H1 (cell line): ENCODE measurements at regions of chr4 and their contacts with region 1.

Region 1: GRCh38 chr4:123767806-123768205 is 371.2 kb downstream of the SPRY1 start:
- DNase-seq: no peak
- H3K4me3 ChIP-seq: no peak overlapping the region
- H3K27ac ChIP-seq: no peak overlapping the region
- H3K4me1 ChIP-seq: no peaks in the 10 kb centered on the region
- H3K27me3 ChIP-seq: no peaks in the 10 kb centered on the region
- CTCF ChIP-seq: no peak
- EP300 ChIP-seq: no peak
- POLR2A ChIP-seq: no peak
- RAD21 ChIP-seq: no peak

Region 2: GRCh38 chr4:123750044-123750443 is 17.8 kb before region 1 on chr4:
- CTCF ChIA-PET with region 1: interaction called, 23 read pairs
- POLR2A ChIA-PET with region 1: no interaction called
- DNase-seq: peak in 1 of 2 experiments; percentile 23
- H3K4me3 ChIP-seq: no peak overlapping the region
- H3K27ac ChIP-seq: no peak overlapping the region
- H3K4me1 ChIP-seq: no peaks in the 10 kb centered on the region; a peak in 1 of 7 replicates
- H3K27me3 ChIP-seq: no peaks in the 10 kb centered on the region
- CTCF ChIP-seq: no peak
- EP300 ChIP-seq: no peak
- POLR2A ChIP-seq: no peak
- RAD21 ChIP-seq: 0 out of 4 replicates have a peak, but pooled peaks of 1 of the 2 experiments have one; percentile 1

Region 3: DNA sequence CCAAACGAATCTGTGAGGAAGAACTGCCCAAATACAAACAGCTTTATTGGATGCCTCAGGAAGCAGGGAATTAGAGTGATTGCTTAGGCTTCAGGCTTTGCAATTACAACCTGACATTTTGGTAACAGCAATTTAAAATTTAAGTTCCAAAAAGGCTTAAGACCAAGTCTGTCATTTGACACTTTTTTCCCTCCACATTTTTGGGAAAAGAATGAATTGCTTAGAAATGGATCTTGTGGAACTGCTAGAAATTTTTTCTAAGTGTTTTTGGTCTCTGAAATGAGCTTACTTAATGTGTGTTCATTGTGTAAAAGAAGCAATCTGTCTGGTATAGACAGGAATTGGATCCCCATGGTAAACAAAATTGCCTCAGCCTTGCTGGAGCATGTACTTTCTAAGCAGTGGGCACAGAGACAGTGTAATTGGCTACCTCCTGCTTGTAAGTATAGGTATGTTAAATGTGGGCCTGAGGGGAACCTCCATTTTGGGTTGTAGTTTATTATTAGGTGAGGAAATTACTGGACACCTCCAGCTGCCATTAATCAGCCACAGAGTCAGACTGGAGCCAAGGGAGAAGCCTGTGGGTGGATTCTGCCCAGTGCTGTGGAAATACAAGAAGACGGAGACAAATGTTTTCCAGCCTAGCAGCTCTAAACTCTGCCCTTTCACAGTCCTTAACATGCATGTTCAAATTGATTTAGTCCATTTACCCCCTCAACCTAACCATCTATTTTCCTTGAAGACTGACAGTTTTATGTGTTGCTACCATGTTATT is 101.7 kb after region 1 on chr4:
- CTCF ChIA-PET with region 1: no interaction called
- POLR2A ChIA-PET with region 1: no interaction called
- DNase-seq: no peak
- H3K4me3 ChIP-seq: no peak overlapping the region
- H3K27ac ChIP-seq: no peak overlapping the region
- H3K4me1 ChIP-seq: peaks cover 0 to 5% (median 0%) of the 10 kb centered on the region in 4 experiments; a peak in 1 of 7 replicates
- H3K27me3 ChIP-seq: no peaks in the 10 kb centered on the region
- CTCF ChIP-seq: no peak
- EP300 ChIP-seq: no peak
- POLR2A ChIP-seq: no peak
- RAD21 ChIP-seq: no peak

Region 4: GRCh38 chr4:124334119-124334518 is 566.3 kb after region 1 on chr4:
- CTCF ChIA-PET with region 1: no interaction called
- POLR2A ChIA-PET with region 1: no interaction called
- DNase-seq: peak in 1 of 2 experiments; percentile 5
- H3K4me3 ChIP-seq: no peak overlapping the region
- H3K27ac ChIP-seq: no peak overlapping the region
- H3K4me1 ChIP-seq: no peaks in the 10 kb centered on the region; a peak in 1 of 7 replicates
- H3K27me3 ChIP-seq: no peaks in the 10 kb centered on the region
- CTCF ChIP-seq: peak in 2 of 3 experiments; percentile 28 to 52; a peak in 2 of 4 replicates
- EP300 ChIP-seq: no peak
- POLR2A ChIP-seq: no peak
- RAD21 ChIP-seq: peak; percentile 85 to 86